K562 (cell line): ENCODE measurements at regions of chr11 and their contacts with region 1.

Region 1: DNA sequence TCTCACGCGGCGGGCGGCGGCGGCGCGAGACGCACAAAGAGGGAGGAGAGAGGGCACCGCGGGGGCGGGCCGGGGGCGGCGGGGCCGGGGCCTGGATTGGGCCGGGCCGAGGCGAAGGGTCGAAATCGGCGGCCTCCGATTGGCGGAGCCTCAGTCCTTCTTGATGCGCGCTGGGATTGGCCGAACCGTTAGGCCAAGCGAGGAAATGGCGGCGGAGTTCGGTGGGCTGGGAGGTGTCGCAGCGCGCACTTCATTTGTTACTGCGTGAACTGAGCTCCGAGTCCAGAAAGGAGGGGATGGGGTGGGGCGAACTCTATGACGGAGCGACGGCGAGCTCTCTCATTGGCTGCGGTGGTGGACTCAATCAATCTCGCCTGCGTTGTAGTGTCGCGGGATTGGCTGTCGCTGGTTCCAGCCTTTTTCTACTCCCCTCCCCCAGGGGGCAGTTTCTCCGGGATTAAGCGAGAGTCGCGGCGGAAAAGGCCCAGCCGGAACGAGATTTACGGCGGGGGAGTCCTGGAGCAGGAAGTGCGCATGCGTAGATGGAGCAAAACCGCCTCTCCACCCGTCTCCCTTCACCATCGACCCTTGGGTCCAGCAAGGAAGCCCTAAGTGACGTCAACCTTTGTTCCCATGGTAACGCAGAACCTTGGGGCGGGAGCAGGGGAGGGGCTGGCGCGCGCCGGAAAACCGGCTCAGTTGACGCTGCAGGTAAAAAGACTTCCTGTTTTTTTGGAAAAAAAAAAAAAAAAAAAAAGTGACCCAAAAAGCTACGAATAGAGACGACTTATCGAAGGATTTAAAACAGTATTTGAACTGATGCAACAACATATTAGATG is at the start of gene SF1:
- DNase-seq: peak; percentile 96 to 100 (median 98)
- ATAC-seq: peak; percentile 97
- H3K4me3 ChIP-seq: peak within 1 kb of the TSS; percentile 67
- H3K27ac ChIP-seq: peak within 1 kb of the TSS; percentile 97
- H3K4me1 ChIP-seq: peaks cover 6 to 18% of the 10 kb centered on the region in 2 experiments; a peak in 3 of 5 replicates
- H3K27me3 ChIP-seq: no peaks in the 10 kb centered on the region
- CTCF ChIP-seq: peak; percentile 13 to 42 (median 17); a peak in 3 of 6 replicates
- EP300 ChIP-seq: peak; percentile 54
- POLR2A ChIP-seq: peak; percentile 89
- RAD21 ChIP-seq: no peak
- polyA plus RNA-seq, gene SF1: 13.1 to 14.0 TPM

Region 2: GRCh38 chr11:64767344-64768299 is 11.1 kb before region 1 on chr11:
- CTCF ChIA-PET with region 1: no interaction called
- POLR2A ChIA-PET with region 1: interaction called, 168 read pairs
- in situ Hi-C with region 1: no loop called
- intact Hi-C with region 1: no loop called
- DNase-seq: peak in 2 of 4 experiments; percentile 47 to 79
- ATAC-seq: peak; percentile 67
- H3K4me3 ChIP-seq: no peak overlapping the region
- H3K27ac ChIP-seq: no peak overlapping the region
- H3K4me1 ChIP-seq: peaks cover 9 to 27% of the 10 kb centered on the region in 2 experiments
- H3K27me3 ChIP-seq: no peaks in the 10 kb centered on the region
- CTCF ChIP-seq: peak; percentile 63 to 88 (median 67)
- EP300 ChIP-seq: no peak
- POLR2A ChIP-seq: peak; percentile 61; the same call in 1 of the 2 replicates
- RAD21 ChIP-seq: peak; percentile 13 to 46; a peak in 3 of 4 replicates

Region 3: GRCh38 chr11:64803163-64803845 is 24.6 kb after region 1 on chr11 and contains the start of gene MAP4K2:
- CTCF ChIA-PET with region 1: no interaction called
- POLR2A ChIA-PET with region 1: interaction called, 4 read pairs
- in situ Hi-C with region 1: no loop called
- intact Hi-C with region 1: loop called (anchors 2 kb)
- DNase-seq: peak; percentile 88 to 98 (median 98)
- ATAC-seq: peak; percentile 94
- H3K4me3 ChIP-seq: peak within 1 kb of the TSS; percentile 55
- H3K27ac ChIP-seq: peak within 1 kb of the TSS; percentile 39
- H3K4me1 ChIP-seq: peaks cover 30 to 62% of the 10 kb centered on the region in 2 experiments
- H3K27me3 ChIP-seq: no peaks in the 10 kb centered on the region
- CTCF ChIP-seq: peak; percentile 37 to 81 (median 55); a peak in 4 of 6 replicates
- EP300 ChIP-seq: no peak
- POLR2A ChIP-seq: peak; percentile 43
- RAD21 ChIP-seq: peak in 1 of 2 experiments; percentile 26; a peak in 2 of 4 replicates
- polyA plus RNA-seq, gene MAP4K2: 0.13 to 0.39 TPM